A549 (cell line): ENCODE measurements at regions of chr16 and their contacts with region 1.

Region 1: DNA sequence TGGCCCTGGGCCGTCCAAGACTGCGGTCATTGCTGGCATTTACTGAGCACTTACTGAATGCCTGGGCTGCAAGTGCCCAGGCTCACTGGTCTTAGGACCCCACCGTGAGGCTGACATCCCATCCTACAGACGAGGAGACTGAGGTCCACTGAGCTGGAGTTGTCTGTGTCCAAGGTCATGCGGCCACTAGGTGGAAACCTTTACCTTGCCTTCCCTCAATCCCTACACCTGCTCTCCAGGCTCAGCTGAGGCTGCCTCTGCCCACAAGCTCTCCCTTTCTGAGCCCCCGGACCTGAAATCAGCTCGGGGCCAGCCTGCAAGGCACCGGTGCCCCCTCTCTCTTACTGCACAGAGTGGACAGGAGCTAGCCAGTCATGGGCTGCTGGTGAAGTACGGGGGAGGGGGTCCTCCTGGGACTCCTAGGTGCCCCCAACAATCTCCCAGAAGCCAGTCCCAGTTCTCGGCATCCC is 1.5 kb downstream of the CASKIN1 start:
- DNase-seq: peak; percentile 69 to 82
- ATAC-seq: peak; percentile 64 to 88
- H3K4me3 ChIP-seq: no peak overlapping the region
- H3K27ac ChIP-seq: no peak overlapping the region
- H3K4me1 ChIP-seq: peaks cover 18% of the 10 kb centered on the region
- CTCF ChIP-seq: peak; percentile 74
- EP300 ChIP-seq: no peak
- POLR2A ChIP-seq: no peak
- RAD21 ChIP-seq: peak; percentile 77 to 87

Region 2: DNA sequence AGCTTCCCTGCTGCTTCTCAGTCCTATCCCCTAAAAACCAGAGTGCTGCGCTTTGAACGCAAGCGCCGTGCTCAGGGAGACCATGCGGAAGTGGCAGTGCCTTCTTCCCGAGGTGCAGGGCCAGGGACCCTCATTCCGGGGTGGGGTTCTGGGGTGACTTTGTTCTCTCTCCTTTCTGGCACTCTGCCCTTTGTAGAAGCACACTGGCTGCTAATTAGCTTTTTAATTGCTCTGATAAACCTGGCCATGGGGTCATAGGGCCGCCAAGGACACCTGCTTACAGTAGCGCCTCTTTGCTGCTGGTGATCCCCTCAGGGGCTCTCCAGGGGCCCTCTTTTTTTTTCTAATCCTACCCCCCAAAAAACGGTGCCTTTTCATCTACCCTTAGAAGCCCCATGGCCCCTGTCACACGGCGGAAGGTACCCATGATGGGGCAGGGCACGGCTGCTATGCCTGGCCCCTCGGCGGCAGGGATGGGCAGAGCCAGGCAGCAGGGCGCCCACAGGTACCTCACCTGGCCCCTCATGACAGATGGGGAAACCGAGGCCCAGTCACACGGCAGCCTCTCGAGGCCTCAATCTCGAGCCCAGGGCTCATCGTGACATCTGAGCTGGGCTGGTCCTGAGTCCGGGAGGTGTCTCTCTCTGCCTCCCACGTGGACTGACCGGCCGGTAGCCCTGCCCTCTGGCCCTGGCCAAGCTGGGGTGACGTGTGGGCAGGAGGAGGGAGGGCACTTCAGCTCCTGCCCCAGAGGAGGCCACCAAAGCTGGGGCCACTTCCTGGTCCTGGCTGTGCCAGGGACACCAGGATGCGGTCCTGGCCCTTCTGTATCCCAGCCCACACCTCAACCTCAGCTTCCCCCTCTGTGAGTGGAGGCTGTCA is 27.9 kb before region 1 on chr16:
- CTCF ChIA-PET with region 1: interaction called, 13 read pairs
- POLR2A ChIA-PET with region 1: no interaction called
- DNase-seq: no peak
- ATAC-seq: no peak
- H3K4me3 ChIP-seq: no peak overlapping the region
- H3K27ac ChIP-seq: no peak overlapping the region
- H3K4me1 ChIP-seq: no peaks in the 10 kb centered on the region; the same call in 2 of the 3 replicates
- CTCF ChIP-seq: no peak
- EP300 ChIP-seq: no peak
- POLR2A ChIP-seq: no peak
- RAD21 ChIP-seq: no peak

Region 3: DNA sequence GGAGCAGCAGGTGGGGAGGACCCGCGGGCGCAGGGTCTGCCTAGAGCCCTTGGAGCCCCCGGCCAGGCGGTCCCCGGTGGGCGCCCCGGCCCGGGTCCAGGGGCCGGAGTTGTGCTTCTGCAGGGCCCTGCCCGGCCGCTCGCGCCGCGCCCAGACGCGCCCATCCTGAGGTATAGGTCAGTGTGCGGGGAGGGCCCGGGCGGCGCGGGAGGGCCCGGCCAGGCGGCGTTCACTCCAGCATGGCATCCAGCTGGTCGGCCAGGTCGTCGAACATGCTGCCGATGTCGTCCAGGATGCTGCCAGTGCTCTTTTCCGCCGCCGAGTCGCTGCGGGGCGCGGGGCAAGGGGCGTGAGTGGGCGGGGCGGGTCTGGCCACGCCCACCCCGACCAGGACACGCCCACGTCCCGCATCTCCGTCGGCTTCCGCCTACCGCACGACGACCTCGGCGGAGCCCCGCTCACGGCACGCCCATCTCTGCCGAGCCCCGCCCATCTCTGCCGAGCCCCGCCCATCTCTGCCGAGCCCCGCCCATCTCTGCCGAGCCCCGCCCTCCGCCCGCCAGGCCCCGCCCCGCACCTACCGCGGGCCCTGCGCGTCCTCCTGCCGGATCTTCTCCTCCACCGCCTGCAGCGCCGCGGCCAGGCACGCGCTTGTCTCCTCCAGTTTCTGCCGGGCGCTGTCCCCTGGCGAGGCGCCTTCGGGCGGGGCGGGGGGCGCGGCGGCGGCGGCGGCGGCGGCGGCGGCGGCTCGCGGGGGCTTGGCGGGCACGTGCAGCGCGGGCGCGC is 16.4 kb before region 1 on chr16:
- CTCF ChIA-PET with region 1: interaction called, 13 read pairs
- POLR2A ChIA-PET with region 1: no interaction called
- DNase-seq: peak in 1 of 2 experiments; percentile 60
- ATAC-seq: peak in 1 of 2 experiments; percentile 20; a peak in 3 of 6 replicates
- H3K4me3 ChIP-seq: no peak overlapping the region
- H3K27ac ChIP-seq: no peak overlapping the region
- H3K4me1 ChIP-seq: no peaks in the 10 kb centered on the region
- CTCF ChIP-seq: no peak
- EP300 ChIP-seq: no peak
- POLR2A ChIP-seq: no peak
- RAD21 ChIP-seq: no peak

Region 4: DNA sequence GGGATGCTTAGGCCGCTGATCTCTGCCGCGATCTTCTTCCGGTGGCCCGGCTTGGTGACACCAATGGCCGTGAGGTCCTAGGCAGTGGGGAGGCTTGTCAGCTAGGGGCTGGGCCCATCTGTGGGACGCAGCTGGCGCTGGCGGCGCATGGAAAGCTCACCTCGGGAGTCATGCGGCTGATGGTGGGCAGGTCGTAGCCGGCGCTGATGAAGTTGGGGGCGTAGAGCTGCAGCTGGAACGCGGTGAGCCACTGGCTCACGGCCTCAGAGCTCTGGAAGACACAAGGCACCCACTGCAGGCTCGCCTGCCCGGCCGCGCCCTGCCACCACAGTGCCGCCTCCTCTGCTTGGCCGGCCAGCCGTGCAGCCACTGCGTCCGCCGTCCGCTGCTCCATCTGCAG is 11.2 kb before region 1 on chr16:
- CTCF ChIA-PET with region 1: interaction called, 19 read pairs
- POLR2A ChIA-PET with region 1: no interaction called
- DNase-seq: no peak
- ATAC-seq: no peak
- H3K4me3 ChIP-seq: no peak overlapping the region
- H3K27ac ChIP-seq: no peak overlapping the region
- H3K4me1 ChIP-seq: no peaks in the 10 kb centered on the region
- CTCF ChIP-seq: no peak
- EP300 ChIP-seq: no peak
- POLR2A ChIP-seq: no peak
- RAD21 ChIP-seq: no peak

Region 5: GRCh38 chr16:2205104-2205966 is 10.4 kb after region 1 on chr16 and contains the start of gene MLST8:
- CTCF ChIA-PET with region 1: interaction called, 28 read pairs
- POLR2A ChIA-PET with region 1: interaction called, 8 read pairs
- DNase-seq: peak; percentile 89 to 90
- ATAC-seq: peak; percentile 60 to 77
- H3K4me3 ChIP-seq: peak within 1 kb of the TSS; percentile 83
- H3K27ac ChIP-seq: peak within 1 kb of the TSS; percentile 97 to 98
- H3K4me1 ChIP-seq: peaks cover 9% of the 10 kb centered on the region; the same call in 2 of the 3 replicates
- CTCF ChIP-seq: no peak
- EP300 ChIP-seq: no peak
- POLR2A ChIP-seq: peak; percentile 65
- RAD21 ChIP-seq: no peak
- polyA plus RNA-seq, gene MLST8: 46.8 and 49.5 TPM in 2 replicates

Region 6: GRCh38 chr16:2251483-2252240 is 56.8 kb after region 1 on chr16 and contains the start of gene ECI1:
- CTCF ChIA-PET with region 1: interaction called, 33 read pairs
- POLR2A ChIA-PET with region 1: interaction called, 9 read pairs
- DNase-seq: peak; percentile 96 to 98
- ATAC-seq: peak; percentile 83 to 88
- H3K4me3 ChIP-seq: peak within 1 kb of the TSS; percentile 91
- H3K27ac ChIP-seq: peak within 1 kb of the TSS; percentile 96 to 98
- H3K4me1 ChIP-seq: peaks cover 20% of the 10 kb centered on the region
- CTCF ChIP-seq: peak; percentile 56
- EP300 ChIP-seq: no peak
- POLR2A ChIP-seq: peak; percentile 88
- RAD21 ChIP-seq: peak; percentile 43 to 70
- polyA plus RNA-seq, gene ECI1: 41.8 and 47.9 TPM in 2 replicates